ENCODE measurements at regions of chr4 and their contacts with region 1.

Region 1: GRCh38 chr4:71814433-71814832 is 30.6 kb upstream of the GC start:
- DNase-seq: no peak
- ATAC-seq: no peak
- H3K4me3 ChIP-seq: no peak overlapping the region
- H3K27ac ChIP-seq: no peak overlapping the region
- H3K4me1 ChIP-seq: no peaks in the 10 kb centered on the region
- H3K27me3 ChIP-seq: no peaks in the 10 kb centered on the region

Region 2: GRCh38 chr4:71501992-71502391 is 312.4 kb before region 1 on chr4:
- intact Hi-C with region 1: loop called in 1 of 2 experiments (anchors 10 kb)
- DNase-seq: no peak
- ATAC-seq: no peak
- H3K4me3 ChIP-seq: no peak overlapping the region
- H3K27ac ChIP-seq: no peak overlapping the region
- H3K4me1 ChIP-seq: no peaks in the 10 kb centered on the region
- H3K27me3 ChIP-seq: no peaks in the 10 kb centered on the region

Region 3: DNA sequence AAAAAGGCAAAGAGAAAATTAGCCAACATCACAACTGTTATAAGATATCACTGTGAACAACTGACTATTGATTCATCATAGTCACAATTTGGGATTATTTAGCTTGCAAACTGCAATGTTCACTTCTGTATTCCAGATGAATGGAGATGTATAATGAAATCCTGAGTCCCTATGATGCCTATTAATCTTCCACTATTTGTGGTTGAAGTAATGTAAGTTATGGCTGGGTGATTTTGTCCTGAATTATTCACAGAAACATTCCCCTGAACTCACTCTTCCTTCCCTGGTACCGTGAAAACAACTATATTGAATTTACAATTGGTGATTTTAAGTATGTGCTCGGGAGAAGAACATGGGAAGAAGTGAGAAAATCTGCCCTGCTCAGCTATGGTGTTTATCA is 166.5 kb after region 1 on chr4:
- intact Hi-C with region 1: no loop called
- DNase-seq: no peak
- ATAC-seq: no peak
- H3K4me3 ChIP-seq: no peak overlapping the region
- H3K27ac ChIP-seq: no peak overlapping the region
- H3K4me1 ChIP-seq: no peaks in the 10 kb centered on the region
- H3K27me3 ChIP-seq: no peaks in the 10 kb centered on the region

Measured in aorta (tissue), 5 donors.